Colonic mucosa (tissue), 4 donors: ENCODE measurements at regions of chr13 and their contacts with region 1.

Region 1: GRCh38 chr13:98653463-98653985 is 76.6 kb upstream of the STK24 start:
- DNase-seq: peak; percentile 89
- H3K4me3 ChIP-seq: no peak overlapping the region
- H3K27ac ChIP-seq: no peak overlapping the region
- H3K4me1 ChIP-seq: peaks cover 4% of the 10 kb centered on the region
- H3K27me3 ChIP-seq: no peaks in the 10 kb centered on the region
- CTCF ChIP-seq: peak; percentile 86

Region 2: GRCh38 chr13:98123176-98123575 is 530.3 kb before region 1 on chr13:
- intact Hi-C with region 1: no loop called
- DNase-seq: no peak
- H3K4me3 ChIP-seq: no peak overlapping the region
- H3K27ac ChIP-seq: no peak overlapping the region
- H3K4me1 ChIP-seq: no peaks in the 10 kb centered on the region
- H3K27me3 ChIP-seq: no peaks in the 10 kb centered on the region
- CTCF ChIP-seq: no peak

Region 3: GRCh38 chr13:98445340-98446233 is 207.9 kb before region 1 on chr13:
- intact Hi-C with region 1: loop called (anchors 5 kb)
- DNase-seq: peak; percentile 72
- H3K4me3 ChIP-seq: no peak overlapping the region
- H3K27ac ChIP-seq: no peak overlapping the region
- H3K4me1 ChIP-seq: no peaks in the 10 kb centered on the region
- H3K27me3 ChIP-seq: no peaks in the 10 kb centered on the region
- CTCF ChIP-seq: peak; percentile 96

Region 4: DNA sequence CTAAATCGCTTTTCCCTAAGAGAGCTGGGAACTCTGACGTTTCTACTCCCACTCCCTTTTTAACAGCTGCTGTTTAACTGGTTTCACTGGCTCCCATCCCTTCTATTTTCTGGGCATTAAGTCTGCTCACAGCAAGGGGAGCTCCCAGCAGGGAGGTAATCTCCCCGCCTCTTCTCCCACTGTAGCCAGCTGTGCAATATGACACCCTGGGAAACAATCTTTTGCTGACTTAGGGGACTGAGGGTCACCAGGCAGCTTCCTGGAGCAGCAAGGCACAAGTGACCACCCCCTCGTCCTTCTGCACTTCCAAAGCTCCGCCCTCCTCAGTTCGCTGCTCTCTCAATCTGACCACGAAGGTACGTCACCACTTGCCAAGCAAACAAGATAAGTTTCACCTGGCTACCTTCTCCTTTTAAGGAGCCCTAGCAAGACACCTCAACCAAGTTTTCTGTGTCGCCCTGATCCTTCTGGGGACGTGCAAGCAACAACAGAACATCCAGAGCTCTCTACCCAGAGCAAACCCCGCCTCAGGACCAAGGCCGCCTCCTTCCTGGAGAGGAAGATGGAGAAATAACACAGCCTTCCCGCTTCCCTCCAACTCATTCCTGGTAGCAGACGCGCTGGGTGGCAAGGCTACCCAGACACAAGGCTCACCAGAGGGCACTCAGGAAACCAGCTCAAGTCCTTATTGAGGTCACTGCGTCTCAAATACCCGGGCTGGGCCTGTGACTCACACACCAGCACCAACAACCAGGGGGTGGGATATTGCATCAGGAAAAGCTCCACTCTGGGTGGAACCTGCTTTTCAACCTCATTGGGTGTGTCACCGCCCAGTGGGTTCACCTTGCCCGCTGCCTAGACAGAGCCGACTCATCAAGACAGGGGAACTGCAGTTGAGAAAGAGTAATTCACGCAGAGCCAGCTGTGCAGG is 169.0 kb before region 1 on chr13:
- intact Hi-C with region 1: loop called (anchors 2 kb)
- DNase-seq: peak; percentile 91
- H3K4me3 ChIP-seq: no peak overlapping the region
- H3K27ac ChIP-seq: peak overlapping the region; percentile 76
- H3K4me1 ChIP-seq: peaks cover 31% of the 10 kb centered on the region
- H3K27me3 ChIP-seq: no peaks in the 10 kb centered on the region
- CTCF ChIP-seq: no peak

Region 5: DNA sequence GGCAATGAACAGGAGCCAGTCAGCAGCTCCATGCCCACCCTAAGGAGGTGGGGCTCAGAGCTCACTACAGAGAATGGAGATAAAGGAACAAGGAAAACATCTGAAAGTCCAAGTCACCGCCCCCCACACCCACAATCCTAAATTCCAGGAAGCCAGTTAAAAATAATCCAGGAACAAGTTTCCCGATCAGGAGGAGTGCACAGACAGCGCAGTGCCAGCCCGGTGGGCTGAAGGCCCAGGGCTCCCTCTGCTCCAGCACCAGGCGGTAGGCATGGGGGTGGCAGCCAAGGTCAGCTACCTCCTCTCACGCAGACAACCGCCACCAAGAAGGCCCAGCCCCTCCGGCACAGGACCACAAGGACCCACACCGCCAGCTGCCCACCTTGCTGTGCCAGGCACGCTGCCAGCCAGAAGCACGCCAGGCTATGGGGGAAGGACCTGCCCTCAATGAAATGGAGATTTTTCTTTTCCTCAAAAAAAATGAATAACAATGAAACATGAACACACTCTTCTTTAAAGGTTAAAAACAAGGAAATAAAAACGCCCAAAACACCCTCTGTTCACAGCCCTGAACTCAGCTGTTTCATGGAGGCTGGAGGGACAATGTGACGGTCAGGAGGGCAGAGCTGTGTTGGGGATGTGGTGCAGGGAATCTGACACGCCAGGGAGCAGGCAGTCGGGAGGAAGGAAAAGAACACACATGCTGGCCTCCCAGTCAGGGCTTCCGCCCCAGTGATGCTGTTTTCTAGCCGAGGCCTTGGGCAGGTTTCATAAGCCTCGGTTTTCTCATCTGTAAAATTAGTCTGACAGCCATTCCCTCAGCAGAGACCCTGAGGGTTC is 87.6 kb before region 1 on chr13:
- intact Hi-C with region 1: loop called (anchors 5 kb)
- DNase-seq: peak; percentile 88
- H3K4me3 ChIP-seq: peak overlapping the region; percentile 16
- H3K27ac ChIP-seq: peak overlapping the region; percentile 92
- H3K4me1 ChIP-seq: peaks cover 26% of the 10 kb centered on the region
- H3K27me3 ChIP-seq: no peaks in the 10 kb centered on the region
- CTCF ChIP-seq: no peak

Region 6: DNA sequence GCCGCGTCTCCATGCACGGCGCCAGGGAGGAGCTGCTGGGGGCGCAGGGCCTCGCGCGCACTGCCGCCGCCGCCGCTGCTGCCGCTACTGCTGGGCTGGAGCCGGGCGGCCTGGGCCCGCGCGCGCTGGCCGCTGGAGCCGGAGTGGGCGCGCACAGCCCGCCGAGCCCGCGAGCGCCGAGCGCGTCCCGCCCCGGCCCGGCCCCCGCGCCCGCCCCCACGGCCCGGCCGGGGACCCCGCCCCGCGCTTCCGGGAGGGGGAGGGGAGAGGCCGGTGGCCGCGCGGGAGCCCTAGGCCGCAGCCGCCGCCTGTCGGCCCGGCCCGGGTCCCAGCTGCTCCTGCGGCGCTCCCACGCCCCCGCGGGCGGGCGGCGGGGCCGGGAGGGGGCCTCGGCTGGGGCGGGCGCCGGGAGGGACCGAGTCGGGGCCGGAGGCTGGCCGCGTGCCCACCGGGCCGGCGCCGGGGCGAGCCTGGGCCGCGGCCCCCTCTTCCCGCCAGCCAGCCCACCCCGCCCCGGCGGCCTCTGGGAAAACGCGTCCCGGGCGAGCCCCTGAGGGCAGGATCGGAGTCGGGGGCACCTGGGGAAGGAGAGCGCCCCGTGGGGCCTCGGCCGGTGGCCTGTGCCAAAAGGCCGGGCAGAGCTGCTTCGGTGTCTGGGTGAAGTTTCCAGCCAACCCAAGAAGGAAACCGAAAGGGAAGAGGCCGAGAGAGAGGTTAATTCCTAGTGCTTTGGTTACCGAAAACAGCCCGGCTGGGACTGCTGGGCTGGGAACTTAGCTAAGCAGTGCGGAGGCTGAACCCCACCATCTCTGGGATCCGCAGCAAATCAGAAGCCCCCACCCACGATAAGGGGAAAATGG is 76.3 kb before region 1 on chr13 and contains the start of gene STK24:
- intact Hi-C with region 1: loop called (anchors 5 kb)
- DNase-seq: peak; percentile 72
- H3K4me3 ChIP-seq: peak within 1 kb of the TSS; percentile 86
- H3K27ac ChIP-seq: peak within 1 kb of the TSS; percentile 94
- H3K4me1 ChIP-seq: peaks cover 12% of the 10 kb centered on the region
- H3K27me3 ChIP-seq: no peaks in the 10 kb centered on the region
- CTCF ChIP-seq: no peak
- total RNA-seq, gene STK24: 160 to 206 TPM

Region 7: GRCh38 chr13:98751861-98752466 is 98.4 kb after region 1 on chr13:
- intact Hi-C with region 1: no loop called
- DNase-seq: no peak
- H3K4me3 ChIP-seq: peak overlapping the region; percentile 42
- H3K27ac ChIP-seq: no peak overlapping the region
- H3K4me1 ChIP-seq: no peaks in the 10 kb centered on the region
- H3K27me3 ChIP-seq: peaks cover 24% of the 10 kb centered on the region
- CTCF ChIP-seq: no peak